MCF 10A (cell line): ENCODE measurements at regions of chr16 and their contacts with region 1.

Region 1: DNA sequence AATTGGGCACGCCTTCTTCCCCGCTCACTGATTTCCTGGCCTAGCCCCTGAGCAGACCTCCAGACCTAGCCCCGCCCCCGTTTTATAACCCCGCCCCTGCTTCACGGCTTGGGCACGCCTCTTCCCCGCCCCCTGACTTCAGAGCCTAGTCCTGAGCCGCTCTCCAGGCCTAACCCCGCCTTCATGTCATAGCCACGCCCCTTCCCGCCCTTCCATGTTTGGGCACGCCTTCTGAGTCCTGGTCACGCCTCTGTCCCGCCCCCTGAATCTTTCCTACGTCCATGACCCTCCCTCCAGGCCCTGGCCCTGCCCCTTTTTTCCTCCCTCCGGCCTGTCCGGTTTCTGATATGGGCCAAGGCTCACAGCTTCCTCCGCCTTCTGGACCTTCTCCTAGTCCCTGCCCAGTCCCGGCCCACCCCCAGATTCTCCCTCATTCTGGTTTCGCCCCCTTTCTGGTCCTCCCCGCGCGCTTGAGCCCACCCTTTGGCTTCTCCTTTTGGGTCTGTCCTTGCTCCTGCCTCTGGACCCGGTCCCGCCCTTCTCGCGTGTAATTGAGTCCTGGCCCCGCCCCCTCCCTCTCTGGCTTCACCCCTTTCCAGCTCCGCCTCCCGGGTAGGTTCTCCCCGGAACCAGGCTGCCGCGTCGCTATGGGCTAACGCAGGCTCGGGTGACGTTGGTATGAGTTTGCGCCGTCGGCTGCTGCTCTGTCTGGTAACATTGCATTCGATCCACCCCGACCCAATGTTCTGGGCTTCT is 15.1 kb upstream of the EEF2K start:
- DNase-seq: peak; percentile 99
- H3K4me3 Mint-ChIP-seq: peak overlapping the region; percentile 78
- H3K27ac Mint-ChIP-seq: peak overlapping the region; percentile 95
- H3K4me1 Mint-ChIP-seq: peaks cover 34% of the 10 kb centered on the region
- H3K27me3 Mint-ChIP-seq: no peaks in the 10 kb centered on the region
- CTCF ChIP-seq: no peak

Region 2: DNA sequence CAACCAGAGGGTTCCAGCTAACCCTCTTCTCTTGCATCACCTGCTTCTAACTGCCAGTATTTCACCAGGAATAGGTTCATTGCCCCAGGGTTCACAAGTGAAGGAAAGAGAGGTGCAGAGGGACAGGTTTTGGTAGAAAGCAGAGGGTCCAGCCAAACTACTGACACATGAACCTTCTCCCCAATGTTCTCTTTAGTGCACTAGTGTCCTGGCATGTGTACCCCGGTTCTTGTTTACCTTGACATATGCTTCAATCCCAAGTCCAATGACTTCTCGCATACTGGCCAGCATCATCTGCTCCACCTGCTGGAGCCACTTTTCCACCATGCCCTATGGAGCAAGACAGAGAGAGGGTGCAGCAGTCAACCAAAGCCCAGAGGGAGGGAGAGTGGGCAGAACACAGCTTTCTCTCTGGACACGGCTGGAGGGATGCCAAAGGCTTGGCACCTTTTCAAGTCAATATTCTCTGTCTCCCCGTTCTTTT is 1130.9 kb before region 1 on chr16:
- CTCF ChIA-PET with region 1: no interaction called
- POLR2A ChIA-PET with region 1: no interaction called
- intact Hi-C with region 1: no loop called
- DNase-seq: no peak
- H3K4me3 Mint-ChIP-seq: no peak overlapping the region
- H3K27ac Mint-ChIP-seq: no peak overlapping the region
- H3K4me1 Mint-ChIP-seq: no peaks in the 10 kb centered on the region
- H3K27me3 Mint-ChIP-seq: peaks cover 27% of the 10 kb centered on the region
- CTCF ChIP-seq: no peak

Region 3: DNA sequence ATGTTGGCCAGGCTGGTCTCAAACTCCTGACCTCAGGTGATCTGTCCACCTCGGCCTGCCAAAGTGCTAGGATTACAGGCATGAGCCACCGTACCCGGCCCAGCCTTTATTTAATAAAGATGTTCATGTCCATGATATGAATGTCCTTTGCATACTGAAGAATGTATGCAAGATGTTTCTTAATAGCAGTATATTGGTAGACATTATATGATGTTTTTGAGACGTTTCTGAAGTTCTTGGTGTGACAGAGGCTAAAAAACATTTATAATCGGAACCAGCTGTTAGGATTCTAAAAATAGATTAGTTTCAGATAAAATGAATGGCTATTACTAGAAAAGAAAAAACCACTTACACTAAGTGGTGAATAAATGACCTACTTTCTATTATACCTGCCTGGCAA is 201.8 kb before region 1 on chr16:
- CTCF ChIA-PET with region 1: interaction called, 14 read pairs
- POLR2A ChIA-PET with region 1: interaction called, 4 read pairs
- intact Hi-C with region 1: no loop called
- DNase-seq: no peak
- H3K4me3 Mint-ChIP-seq: no peak overlapping the region
- H3K27ac Mint-ChIP-seq: no peak overlapping the region
- H3K4me1 Mint-ChIP-seq: no peaks in the 10 kb centered on the region
- H3K27me3 Mint-ChIP-seq: no peaks in the 10 kb centered on the region
- CTCF ChIP-seq: no peak

Region 4: DNA sequence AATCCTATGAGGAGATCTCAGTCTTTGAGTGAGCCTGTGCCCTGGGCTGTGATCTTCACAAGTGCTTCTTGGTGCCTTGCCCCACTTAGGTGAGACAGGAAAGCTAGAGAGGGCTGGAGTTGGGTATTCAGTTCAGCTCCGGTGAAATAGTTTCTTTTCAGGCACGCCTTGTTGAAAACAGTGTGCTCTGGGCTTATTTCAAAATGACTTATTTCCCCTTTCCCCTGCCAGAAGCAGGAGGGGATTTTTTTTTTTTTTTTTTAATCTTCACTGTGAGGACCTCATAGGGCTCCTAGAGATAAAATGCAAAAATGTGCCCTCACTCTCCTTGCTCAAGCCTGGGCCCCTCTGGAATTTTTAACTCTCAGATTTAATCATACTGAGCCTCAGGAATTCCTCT is 155.8 kb before region 1 on chr16:
- CTCF ChIA-PET with region 1: interaction called, 11 read pairs
- POLR2A ChIA-PET with region 1: no interaction called
- intact Hi-C with region 1: no loop called
- DNase-seq: no peak
- H3K4me3 Mint-ChIP-seq: no peak overlapping the region
- H3K27ac Mint-ChIP-seq: no peak overlapping the region
- H3K4me1 Mint-ChIP-seq: peaks cover 13% of the 10 kb centered on the region
- H3K27me3 Mint-ChIP-seq: no peaks in the 10 kb centered on the region
- CTCF ChIP-seq: no peak

Region 5: DNA sequence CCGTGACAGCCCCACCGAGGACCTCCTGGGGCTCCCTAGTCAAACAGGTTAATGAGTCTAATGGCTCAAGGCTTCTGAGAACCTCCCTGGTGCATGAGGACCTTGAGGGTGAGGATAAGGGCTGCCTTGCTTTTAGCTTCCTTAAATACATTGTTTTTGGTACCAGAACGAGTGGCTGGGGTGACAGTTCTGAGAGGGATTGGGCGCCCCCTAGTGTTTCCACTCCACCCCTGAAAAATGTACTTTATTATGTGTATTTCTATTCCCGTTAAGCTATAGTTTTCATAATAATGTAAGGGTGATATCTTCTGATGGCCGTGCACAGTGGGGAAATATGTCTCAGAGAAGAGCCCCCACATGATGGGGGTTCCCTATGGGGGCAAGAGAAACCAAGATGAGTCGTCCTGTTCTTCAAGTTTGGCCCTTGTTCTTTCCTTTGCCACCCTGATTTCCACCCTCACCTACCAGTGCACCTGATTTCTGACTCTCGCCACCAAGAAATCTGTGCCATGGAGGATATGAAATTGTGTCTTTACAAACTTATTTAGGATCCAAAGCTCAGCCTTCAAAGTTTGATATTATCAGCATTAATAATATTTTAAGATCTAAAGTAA is 113.1 kb before region 1 on chr16:
- CTCF ChIA-PET with region 1: interaction called, 47 read pairs
- POLR2A ChIA-PET with region 1: interaction called, 10 read pairs
- intact Hi-C with region 1: loop called (anchors 2 kb)
- DNase-seq: peak; percentile 69
- H3K4me3 Mint-ChIP-seq: no peak overlapping the region
- H3K27ac Mint-ChIP-seq: no peak overlapping the region
- H3K4me1 Mint-ChIP-seq: no peaks in the 10 kb centered on the region
- H3K27me3 Mint-ChIP-seq: no peaks in the 10 kb centered on the region
- CTCF ChIP-seq: peak; percentile 81

Region 6: GRCh38 chr16:22206013-22206841 is 15.3 kb after region 1 on chr16 and contains the start of gene EEF2K:
- CTCF ChIA-PET with region 1: interaction called, 8 read pairs
- POLR2A ChIA-PET with region 1: interaction called, 67 read pairs
- intact Hi-C with region 1: no loop called
- DNase-seq: peak; percentile 96
- H3K4me3 Mint-ChIP-seq: peak within 1 kb of the TSS; percentile 79
- H3K27ac Mint-ChIP-seq: peak within 1 kb of the TSS; percentile 70
- H3K4me1 Mint-ChIP-seq: peaks cover 19% of the 10 kb centered on the region
- H3K27me3 Mint-ChIP-seq: no peaks in the 10 kb centered on the region
- CTCF ChIP-seq: peak; percentile 83
- total RNA-seq, gene EEF2K: 15.0 and 15.9 TPM in 2 replicates

Region 7: GRCh38 chr16:22374311-22375116 is 183.6 kb after region 1 on chr16 and contains the start of gene CDR2:
- CTCF ChIA-PET with region 1: no interaction called
- POLR2A ChIA-PET with region 1: interaction called, 11 read pairs
- intact Hi-C with region 1: no loop called
- DNase-seq: peak; percentile 98
- H3K4me3 Mint-ChIP-seq: peak within 1 kb of the TSS; percentile 99
- H3K27ac Mint-ChIP-seq: peak within 1 kb of the TSS; percentile 80
- H3K4me1 Mint-ChIP-seq: peaks cover 26% of the 10 kb centered on the region
- H3K27me3 Mint-ChIP-seq: no peaks in the 10 kb centered on the region
- CTCF ChIP-seq: no peak
- total RNA-seq, gene CDR2: 20.0 and 23.9 TPM in 2 replicates